Left lung (tissue), 14 donors: ENCODE measurements at regions of chr10 and their contacts with region 1.

Region 1: DNA sequence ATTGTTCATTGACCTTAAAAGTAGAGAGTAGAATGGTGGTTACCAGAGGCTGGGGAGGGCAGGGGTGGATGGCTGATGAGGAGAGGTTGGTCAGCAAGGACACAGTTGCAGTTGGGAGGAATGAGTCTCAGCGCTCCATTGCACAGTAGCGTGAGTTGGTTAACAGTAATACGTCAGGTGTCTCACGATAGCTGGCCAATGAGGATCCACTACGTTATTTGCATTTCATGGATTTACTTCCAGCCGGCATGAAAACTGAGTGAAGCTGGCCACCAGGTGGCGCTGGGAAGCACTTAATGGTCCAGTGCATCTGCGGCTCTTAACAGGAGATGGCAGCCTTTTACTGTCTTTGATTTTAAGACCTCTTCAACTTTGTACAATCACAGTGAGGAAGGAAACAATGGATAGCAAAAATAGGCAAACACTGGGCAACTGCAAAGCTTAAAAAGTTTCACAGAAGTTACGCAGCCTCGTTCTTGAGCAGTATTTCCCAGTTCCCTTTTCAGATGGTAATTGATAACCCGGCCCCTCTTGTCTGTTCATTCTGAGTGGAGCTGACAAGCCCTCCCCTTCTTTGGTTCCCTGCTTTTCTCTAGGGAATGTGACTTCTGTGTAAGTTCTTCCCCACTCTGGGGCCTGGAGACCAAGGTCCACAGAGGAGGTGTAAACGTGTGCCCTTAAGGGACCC is 23.7 kb downstream of the AKR1E2 start:
- DNase-seq: peak; percentile 85 to 93 (median 91)
- ATAC-seq: peak; percentile 96
- H3K4me3 ChIP-seq: no peak overlapping the region
- H3K27ac ChIP-seq: no peak overlapping the region
- H3K4me1 ChIP-seq: peaks cover 5 to 28% of the 10 kb centered on the region in 2 donors
- H3K27me3 ChIP-seq: no peaks in the 10 kb centered on the region
- CTCF ChIP-seq: peak; percentile 91 to 98

Region 2: GRCh38 chr10:5094265-5095205 is 244.8 kb after region 1 on chr10 and contains the start of gene AKR1C3:
- intact Hi-C with region 1: loop called in 1 of 2 experiments (anchors 10 kb)
- DNase-seq: peak in 2 of 4 donors; percentile 20 to 49
- ATAC-seq: peak; percentile 85
- H3K4me3 ChIP-seq: peak within 1 kb of the TSS; percentile 31 to 37
- H3K27ac ChIP-seq: peak within 1 kb of the TSS; percentile 52 to 69
- H3K4me1 ChIP-seq: peaks cover 0 to 4% of the 10 kb centered on the region in 2 donors
- H3K27me3 ChIP-seq: no peaks in the 10 kb centered on the region
- CTCF ChIP-seq: peak; percentile 53 to 66
- polyA plus RNA-seq, gene AKR1C3: 1.5 to 2.9 (median 2.0) TPM

Region 3: DNA sequence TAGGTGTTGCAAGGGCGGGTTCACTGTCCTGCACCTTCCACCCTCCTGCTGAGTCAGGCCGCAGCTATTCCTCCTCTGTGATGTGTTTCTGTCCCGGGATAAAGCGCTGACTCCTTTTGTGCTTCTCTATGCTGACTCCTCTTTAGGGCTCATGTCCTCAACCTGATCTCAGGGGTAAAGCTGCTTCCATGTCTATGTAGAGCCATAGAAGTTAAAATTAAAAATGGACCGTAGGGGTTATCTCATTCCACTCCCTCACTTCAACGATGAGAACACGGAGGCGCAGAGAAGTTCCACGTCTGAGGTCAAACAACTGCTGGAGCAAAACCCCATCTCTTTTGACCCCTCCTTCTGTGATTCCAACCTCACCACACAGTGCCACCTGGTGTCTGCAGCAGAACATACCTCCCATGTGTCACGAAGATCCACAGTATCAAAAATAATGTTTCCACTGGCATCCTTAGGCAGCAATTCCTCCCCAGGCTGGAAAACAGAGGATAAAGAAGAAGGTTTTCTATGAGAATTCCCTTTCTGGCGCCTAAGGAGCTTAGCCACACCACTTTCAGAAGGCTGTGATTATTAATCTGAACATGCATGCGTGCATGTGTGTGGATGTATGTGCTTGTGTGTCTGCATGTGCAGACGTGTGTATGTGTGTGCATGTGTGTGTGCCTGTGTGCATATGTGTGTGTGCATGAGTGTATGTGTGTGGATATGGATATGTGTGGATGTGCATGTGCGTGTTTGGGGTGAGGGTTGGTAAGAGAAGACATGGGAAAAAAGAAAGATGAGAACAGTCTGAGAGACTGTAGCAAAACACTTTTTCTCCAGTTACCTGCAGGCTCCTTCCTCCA is 433.8 kb after region 1 on chr10:
- intact Hi-C with region 1: loop called in 1 of 2 experiments (anchors 5 kb)
- DNase-seq: peak in 3 of 4 donors; percentile 31 to 66 (median 54)
- ATAC-seq: peak; percentile 91
- H3K4me3 ChIP-seq: no peak overlapping the region
- H3K27ac ChIP-seq: peak overlapping the region in 1 of 2 donors; percentile 76
- H3K4me1 ChIP-seq: peaks cover 0 to 30% of the 10 kb centered on the region in 2 donors
- H3K27me3 ChIP-seq: no peaks in the 10 kb centered on the region
- CTCF ChIP-seq: peak; percentile 58 to 68